ENCODE measurements at regions of chr18 and their contacts with region 1.

Region 1: GRCh38 chr18:12890506-12890905 is 6.5 kb upstream of the PTPN2 start:
- H3K4me3 ChIP-seq: no peak overlapping the region
- H3K27ac ChIP-seq: no peak overlapping the region
- H3K4me1 ChIP-seq: no peaks in the 10 kb centered on the region
- CTCF ChIP-seq: no peak

Region 2: DNA sequence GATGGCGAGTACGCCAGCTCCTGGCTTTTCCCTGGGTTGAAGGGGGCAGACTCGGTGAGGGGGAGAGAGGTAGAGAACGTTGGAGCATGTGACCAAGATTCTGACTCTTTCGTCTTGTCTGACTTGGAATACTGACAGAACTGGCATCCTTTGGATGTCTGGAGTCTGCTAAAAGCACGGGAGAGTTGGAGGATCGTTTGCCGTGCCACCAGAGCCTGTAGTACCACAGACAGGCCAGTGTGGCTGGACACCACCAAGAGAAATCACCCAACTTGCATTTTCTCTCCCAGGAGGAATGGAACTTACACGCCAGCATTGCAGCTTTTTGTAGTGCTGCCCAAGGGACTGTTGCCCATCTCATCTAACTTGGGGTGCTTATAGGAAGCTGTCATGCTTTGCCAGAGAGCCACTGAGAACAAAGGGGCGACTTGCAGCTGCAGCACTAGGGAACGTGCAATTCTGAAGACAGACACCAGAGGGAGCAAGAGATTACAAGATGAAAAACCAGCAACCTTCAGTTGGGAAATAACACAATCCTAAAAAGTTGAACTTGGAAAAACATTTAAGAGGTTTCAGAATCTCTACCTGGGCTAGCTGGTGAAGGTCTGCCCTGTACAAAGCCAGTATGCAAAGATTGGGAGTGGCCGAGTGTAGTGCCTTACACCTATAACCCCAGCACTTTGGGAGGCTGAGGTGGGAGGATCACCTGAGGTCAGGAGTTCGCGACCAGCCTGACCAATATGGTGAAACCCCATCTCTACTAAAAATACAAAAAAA is 163.5 kb before region 1 on chr18:
- CTCF ChIA-PET with region 1: interaction called, 24 read pairs
- POLR2A ChIA-PET with region 1: no interaction called
- H3K4me3 ChIP-seq: no peak overlapping the region
- H3K27ac ChIP-seq: no peak overlapping the region
- H3K4me1 ChIP-seq: no peaks in the 10 kb centered on the region
- CTCF ChIP-seq: peak; percentile 73

Region 3: GRCh38 chr18:12744103-12744502 is 146.4 kb before region 1 on chr18:
- CTCF ChIA-PET with region 1: interaction called, 46 read pairs
- POLR2A ChIA-PET with region 1: no interaction called
- H3K4me3 ChIP-seq: no peak overlapping the region
- H3K27ac ChIP-seq: no peak overlapping the region
- H3K4me1 ChIP-seq: peaks cover 6% of the 10 kb centered on the region; the same call in 1 of the 2 replicates
- CTCF ChIP-seq: peak; percentile 39; the same call in 1 of the 2 replicates

Region 4: GRCh38 chr18:12904012-12904516 is 13.6 kb after region 1 on chr18:
- CTCF ChIA-PET with region 1: interaction called, 10 read pairs
- POLR2A ChIA-PET with region 1: no interaction called
- H3K4me3 ChIP-seq: no peak overlapping the region
- H3K27ac ChIP-seq: no peak overlapping the region
- H3K4me1 ChIP-seq: peaks cover 9% of the 10 kb centered on the region; the same call in 1 of the 2 replicates
- CTCF ChIP-seq: no peak

Region 5: GRCh38 chr18:12921178-12921577 is 30.7 kb after region 1 on chr18:
- CTCF ChIA-PET with region 1: interaction called, 10 read pairs
- POLR2A ChIA-PET with region 1: interaction called, 3 read pairs
- H3K4me3 ChIP-seq: no peak overlapping the region
- H3K27ac ChIP-seq: no peak overlapping the region
- H3K4me1 ChIP-seq: no peaks in the 10 kb centered on the region
- CTCF ChIP-seq: no peak